Stomach (tissue), 19 donors: ENCODE measurements at regions of chr7 and their contacts with region 1.

Region 1: DNA sequence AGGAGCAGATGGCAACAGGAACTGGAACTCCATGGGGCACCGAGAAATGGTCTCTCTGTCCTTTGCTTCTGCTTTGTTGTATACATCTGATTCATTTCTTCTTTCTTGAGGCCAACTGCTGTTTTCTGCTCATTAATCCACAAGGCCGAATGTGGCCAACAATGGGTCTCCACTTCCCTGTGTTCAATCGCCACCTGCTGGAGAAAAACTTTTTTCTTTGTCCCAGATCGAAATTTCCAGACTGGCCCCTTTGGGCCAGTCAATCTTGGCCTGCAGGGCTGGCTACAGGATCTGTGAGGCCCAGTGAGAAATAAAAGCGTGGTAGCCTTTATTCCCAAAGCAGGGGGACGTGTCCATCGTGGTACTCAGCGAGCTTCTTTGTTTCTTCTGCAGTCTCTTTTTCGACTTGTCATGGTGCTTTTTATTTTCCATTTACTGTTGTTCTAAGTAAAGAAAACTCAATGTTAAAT is 58.8 kb downstream of the PARP12 start:
- DNase-seq: peak; percentile 43 to 68
- H3K4me3 ChIP-seq: no peak overlapping the region
- H3K27ac ChIP-seq: no peak overlapping the region
- H3K4me1 ChIP-seq: peaks cover 0 to 11% (median 0%) of the 10 kb centered on the region in 4 donors
- H3K27me3 ChIP-seq: no peaks in the 10 kb centered on the region
- CTCF ChIP-seq: peak in 5 of 7 experiments; percentile 16 to 62 (median 55)
- EP300 ChIP-seq: no peak
- POLR2A ChIP-seq: no peak

Region 2: GRCh38 chr7:139494835-139495579 is 508.9 kb before region 1 on chr7:
- intact Hi-C with region 1: loop called (anchors 10 kb)
- DNase-seq: no peak
- H3K4me3 ChIP-seq: no peak overlapping the region
- H3K27ac ChIP-seq: no peak overlapping the region
- H3K4me1 ChIP-seq: peaks cover 4 to 8% (median 6%) of the 10 kb centered on the region in 4 donors
- H3K27me3 ChIP-seq: peaks cover 0 to 12% (median 0%) of the 10 kb centered on the region in 3 donors
- CTCF ChIP-seq: no peak
- EP300 ChIP-seq: no peak
- POLR2A ChIP-seq: no peak

Region 3: GRCh38 chr7:139618482-139619366 is 385.2 kb before region 1 on chr7:
- intact Hi-C with region 1: loop called (anchors 2 kb)
- DNase-seq: peak; percentile 57 to 58
- H3K4me3 ChIP-seq: no peak overlapping the region
- H3K27ac ChIP-seq: peak overlapping the region in 1 of 5 donors; percentile 3
- H3K4me1 ChIP-seq: peaks cover 0 to 9% (median 0%) of the 10 kb centered on the region in 4 donors
- H3K27me3 ChIP-seq: no peaks in the 10 kb centered on the region
- CTCF ChIP-seq: peak in 3 of 7 experiments; percentile 11 to 51 (median 35)
- EP300 ChIP-seq: no peak
- POLR2A ChIP-seq: no peak

Region 4: DNA sequence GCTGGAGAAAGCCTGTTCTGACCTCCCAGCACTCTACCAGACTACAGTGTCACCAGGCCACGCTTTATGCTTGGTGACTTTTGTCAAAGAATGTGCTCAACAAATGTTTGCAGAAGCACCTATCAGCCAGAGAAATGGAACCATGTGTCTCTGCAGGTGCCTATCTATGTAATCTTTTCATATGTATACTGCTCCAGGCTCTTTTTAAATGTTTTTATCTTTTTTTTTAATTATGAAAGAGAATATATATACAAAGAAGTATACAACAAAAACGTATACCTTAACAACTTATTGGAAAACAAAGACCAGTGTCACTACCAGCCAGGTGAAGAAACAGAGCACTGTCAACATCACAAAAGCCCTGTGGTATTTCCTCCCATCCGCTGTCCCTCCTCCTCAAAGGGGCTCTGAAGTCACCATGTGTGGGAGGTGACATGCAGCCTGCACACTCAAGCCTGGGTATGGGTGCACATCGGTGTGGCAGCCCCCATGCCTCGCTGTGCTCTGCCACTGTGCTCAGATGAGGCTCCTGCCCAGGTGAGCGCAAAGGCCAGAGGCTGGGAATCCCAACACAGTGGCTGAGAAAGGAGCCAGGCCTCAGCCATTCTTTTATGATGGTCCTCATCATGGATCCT is 359.9 kb before region 1 on chr7:
- intact Hi-C with region 1: loop called (anchors 5 kb)
- DNase-seq: peak in 1 of 2 donors; percentile 39
- H3K4me3 ChIP-seq: no peak overlapping the region
- H3K27ac ChIP-seq: no peak overlapping the region
- H3K4me1 ChIP-seq: peaks cover 19 to 57% (median 36%) of the 10 kb centered on the region in 4 donors
- H3K27me3 ChIP-seq: no peaks in the 10 kb centered on the region
- CTCF ChIP-seq: no peak
- EP300 ChIP-seq: no peak
- POLR2A ChIP-seq: no peak

Region 5: DNA sequence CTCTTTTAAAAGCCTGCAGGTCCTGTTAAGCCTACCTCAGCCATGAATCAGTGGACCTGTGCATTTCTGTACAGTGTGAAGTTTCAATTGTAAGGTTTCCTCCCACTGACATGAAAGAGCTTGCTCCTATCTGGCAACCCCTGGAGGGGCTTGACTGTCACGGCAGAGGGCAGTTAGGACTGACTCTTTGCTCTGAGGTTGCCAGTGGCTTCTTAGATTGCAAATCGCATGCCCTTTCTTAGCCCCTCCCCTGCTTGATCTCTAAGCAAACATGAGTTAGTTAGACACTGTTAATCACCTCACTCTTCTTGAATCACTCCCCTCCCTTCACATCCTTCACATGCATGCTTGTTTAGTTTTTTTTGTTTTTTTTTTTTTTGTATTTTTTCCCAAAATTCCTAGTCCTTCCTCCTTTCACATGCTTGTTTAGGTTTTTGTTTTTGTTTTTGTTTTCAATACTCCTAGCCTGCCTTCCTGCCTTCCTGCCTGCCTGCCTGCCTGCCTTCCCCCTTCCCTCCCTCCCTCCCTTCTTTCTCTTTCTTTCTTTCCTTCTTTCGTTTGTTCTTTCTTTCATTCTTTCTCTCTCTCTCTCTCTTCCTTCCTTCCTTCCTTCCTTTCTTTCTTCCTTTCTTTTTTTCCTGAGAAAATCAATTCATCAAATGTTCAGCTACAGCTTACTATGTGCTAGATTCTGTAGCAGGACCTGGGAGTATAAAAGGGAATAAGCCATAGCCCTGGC is 220.1 kb before region 1 on chr7:
- intact Hi-C with region 1: loop called (anchors 10 kb)
- DNase-seq: no peak
- H3K4me3 ChIP-seq: no peak overlapping the region
- H3K27ac ChIP-seq: no peak overlapping the region
- H3K4me1 ChIP-seq: peaks cover 3 to 18% (median 10%) of the 10 kb centered on the region in 4 donors
- H3K27me3 ChIP-seq: peaks cover 0 to 6% (median 0%) of the 10 kb centered on the region in 3 donors
- CTCF ChIP-seq: no peak
- EP300 ChIP-seq: no peak
- POLR2A ChIP-seq: no peak

Region 6: DNA sequence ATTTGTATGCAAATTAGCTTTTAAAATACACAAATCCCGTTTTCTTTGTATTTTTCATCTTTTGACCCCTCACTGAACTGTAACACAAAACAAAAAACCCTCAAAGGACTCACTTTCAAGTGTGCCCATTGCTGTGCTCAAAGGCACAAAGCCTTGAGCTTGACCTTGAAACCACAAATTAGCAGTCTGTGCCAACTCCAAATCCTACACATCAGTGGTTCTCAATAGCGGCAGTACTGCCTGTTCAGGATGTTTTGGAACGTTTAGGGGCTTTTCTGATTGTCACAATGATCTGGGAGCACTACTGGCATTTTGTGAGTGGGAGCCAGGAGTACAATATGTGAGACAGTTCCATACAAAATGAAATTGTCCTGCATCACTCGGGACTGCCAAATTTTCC is 117.4 kb after region 1 on chr7:
- intact Hi-C with region 1: no loop called
- DNase-seq: no peak
- H3K4me3 ChIP-seq: no peak overlapping the region
- H3K27ac ChIP-seq: no peak overlapping the region
- H3K4me1 ChIP-seq: no peaks in the 10 kb centered on the region
- H3K27me3 ChIP-seq: no peaks in the 10 kb centered on the region
- CTCF ChIP-seq: no peak
- EP300 ChIP-seq: no peak
- POLR2A ChIP-seq: no peak